Mammary epithelial cell (primary cell): ENCODE measurements at regions of chr18 and their contacts with region 1.

Region 1: GRCh38 chr18:44579028-44579702 is 101.5 kb upstream of the SETBP1 start:
- DNase-seq: peak; percentile 59
- H3K4me3 ChIP-seq: no peak overlapping the region
- H3K27ac ChIP-seq: peak overlapping the region; percentile 1
- H3K4me1 ChIP-seq: peaks cover 6% of the 10 kb centered on the region
- H3K27me3 ChIP-seq: no peaks in the 10 kb centered on the region
- CTCF ChIP-seq: peak; percentile 60 to 68

Region 2: GRCh38 chr18:45566025-45566740 is 987.0 kb after region 1 on chr18:
- CTCF ChIA-PET with region 1: no interaction called
- dilution Hi-C with region 1: no loop called
- in situ Hi-C with region 1: no loop called
- intact Hi-C with region 1: loop called (anchors 5 kb)
- DNase-seq: peak; percentile 93
- H3K4me3 ChIP-seq: peak overlapping the region in 1 of 3 experiments; percentile 8
- H3K27ac ChIP-seq: peak overlapping the region; percentile 76
- H3K4me1 ChIP-seq: peaks cover 21% of the 10 kb centered on the region
- H3K27me3 ChIP-seq: no peaks in the 10 kb centered on the region
- CTCF ChIP-seq: no peak

Region 3: GRCh38 chr18:45828917-45829811 is 1250.0 kb after region 1 on chr18:
- CTCF ChIA-PET with region 1: no interaction called
- dilution Hi-C with region 1: no loop called
- in situ Hi-C with region 1: no loop called
- intact Hi-C with region 1: no loop called
- DNase-seq: no peak
- H3K4me3 ChIP-seq: no peak overlapping the region
- H3K27ac ChIP-seq: no peak overlapping the region
- H3K4me1 ChIP-seq: peaks cover 18% of the 10 kb centered on the region
- H3K27me3 ChIP-seq: no peaks in the 10 kb centered on the region
- CTCF ChIP-seq: no peak